ENCODE measurements at regions of chr6 and their contacts with region 1.

Region 1: DNA sequence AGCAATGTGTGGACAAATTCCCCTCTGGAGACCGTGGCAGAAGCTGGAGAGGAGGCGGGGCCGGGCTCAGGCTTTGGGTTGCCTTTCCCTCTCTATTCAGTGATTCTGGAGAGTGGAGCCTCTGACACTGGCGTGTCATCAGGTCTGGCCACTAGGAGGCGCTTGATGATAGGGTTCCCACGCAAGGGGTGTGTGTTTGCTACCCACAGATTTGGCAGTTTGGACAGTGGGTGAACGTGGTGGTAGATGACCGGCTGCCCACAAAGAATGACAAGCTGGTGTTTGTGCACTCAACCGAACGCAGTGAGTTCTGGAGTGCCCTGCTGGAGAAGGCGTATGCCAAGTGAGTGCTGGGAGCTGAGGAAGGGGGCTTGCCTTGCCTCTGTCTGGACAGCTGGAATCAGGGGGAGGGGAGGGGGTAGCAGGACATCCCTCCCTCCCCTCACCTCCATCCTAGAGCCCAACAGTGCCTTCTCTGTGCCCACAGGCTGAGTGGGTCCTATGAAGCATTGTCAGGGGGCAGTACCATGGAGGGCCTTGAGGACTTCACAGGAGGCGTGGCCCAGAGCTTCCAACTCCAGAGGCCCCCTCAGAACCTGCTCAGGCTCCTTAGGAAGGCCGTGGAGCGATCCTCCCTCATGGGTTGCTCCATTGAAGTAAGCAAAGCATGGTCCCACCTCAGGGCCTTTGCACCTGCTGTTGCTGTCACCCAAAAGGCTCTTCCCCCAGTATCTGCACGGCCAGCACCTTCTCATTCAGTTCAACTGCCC is 14.3 kb downstream of the CAPN11 start:
- DNase-seq: peak; percentile 87
- H3K4me3 Mint-ChIP-seq: no peak overlapping the region
- H3K27ac Mint-ChIP-seq: peak overlapping the region; percentile 9
- H3K4me1 Mint-ChIP-seq: peaks cover 18% of the 10 kb centered on the region
- H3K27me3 Mint-ChIP-seq: peaks cover 21% of the 10 kb centered on the region

Region 2: GRCh38 chr6:44161997-44162338 is 10.9 kb before region 1 on chr6:
- CTCF ChIA-PET with region 1: interaction called, 12 read pairs
- POLR2A ChIA-PET with region 1: no interaction called
- intact Hi-C with region 1: no loop called
- DNase-seq: peak; percentile 20
- H3K4me3 Mint-ChIP-seq: no peak overlapping the region
- H3K27ac Mint-ChIP-seq: no peak overlapping the region
- H3K4me1 Mint-ChIP-seq: peaks cover 8% of the 10 kb centered on the region
- H3K27me3 Mint-ChIP-seq: peaks cover 17% of the 10 kb centered on the region

Region 3: GRCh38 chr6:44221291-44221960 is 48.5 kb after region 1 on chr6:
- CTCF ChIA-PET with region 1: interaction called, 7 read pairs
- POLR2A ChIA-PET with region 1: interaction called, 3 read pairs
- intact Hi-C with region 1: loop called (anchors 5 kb)
- DNase-seq: peak; percentile 88
- H3K4me3 Mint-ChIP-seq: no peak overlapping the region
- H3K27ac Mint-ChIP-seq: no peak overlapping the region
- H3K4me1 Mint-ChIP-seq: peaks cover 34% of the 10 kb centered on the region
- H3K27me3 Mint-ChIP-seq: peaks cover 9% of the 10 kb centered on the region

Region 4: GRCh38 chr6:44246663-44247337 is 73.9 kb after region 1 on chr6 and contains the start of gene HSP90AB1:
- CTCF ChIA-PET with region 1: interaction called, 7 read pairs
- POLR2A ChIA-PET with region 1: no interaction called
- intact Hi-C with region 1: loop called (anchors 2 kb)
- DNase-seq: peak; percentile 99
- H3K4me3 Mint-ChIP-seq: peak within 1 kb of the TSS; percentile 96
- H3K27ac Mint-ChIP-seq: peak within 1 kb of the TSS; percentile 99
- H3K4me1 Mint-ChIP-seq: peaks cover 45% of the 10 kb centered on the region
- H3K27me3 Mint-ChIP-seq: peaks cover 4% of the 10 kb centered on the region
- total RNA-seq, gene HSP90AB1: 1,671 to 1,695 TPM

Region 5: DNA sequence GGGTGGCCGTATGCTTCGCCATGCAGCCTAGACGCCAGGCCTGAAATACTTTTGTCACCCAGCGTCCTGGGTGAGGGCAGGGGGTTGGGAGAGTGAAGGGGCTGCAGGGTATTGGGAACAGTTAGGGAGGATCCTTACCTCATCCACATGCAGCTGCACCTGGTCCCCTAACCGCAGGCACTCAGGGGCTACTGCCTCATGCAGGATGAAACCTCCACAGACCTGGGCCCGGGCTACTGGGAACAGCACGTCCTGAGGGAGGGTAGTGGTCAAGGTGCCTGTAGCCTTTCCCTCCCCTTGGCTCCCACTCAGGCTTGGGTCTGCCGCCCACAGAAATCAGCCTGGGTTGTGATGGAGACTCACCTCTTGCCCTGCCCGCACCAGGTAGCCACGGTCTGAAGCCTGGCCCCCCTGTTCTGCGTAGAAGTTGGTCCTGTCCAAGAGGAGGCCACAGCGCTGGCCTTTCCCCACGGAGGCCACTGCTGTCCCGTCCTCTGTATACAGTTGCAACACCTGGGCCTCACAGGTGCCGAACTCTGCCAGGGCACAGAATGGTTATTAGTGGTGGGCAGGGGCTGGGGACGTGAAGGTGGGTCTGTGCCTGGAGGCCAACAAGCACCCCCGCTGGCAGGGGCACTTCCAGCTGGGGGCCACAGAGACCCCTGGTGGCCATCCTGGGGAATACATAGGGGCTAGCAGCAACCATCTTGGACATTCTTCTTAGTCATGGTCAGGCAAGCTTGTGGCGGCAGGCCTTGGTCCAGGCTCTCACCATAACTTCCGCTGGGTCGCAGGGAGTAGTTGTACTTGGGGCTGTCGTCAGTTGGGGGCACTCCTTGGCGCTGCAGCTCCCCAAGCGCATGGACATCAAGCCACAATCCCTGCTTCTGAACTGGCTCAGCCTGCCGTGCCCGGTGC is 131.6 kb after region 1 on chr6:
- CTCF ChIA-PET with region 1: interaction called, 8 read pairs
- POLR2A ChIA-PET with region 1: no interaction called
- intact Hi-C with region 1: loop called (anchors 1 kb)
- DNase-seq: peak; percentile 45
- H3K4me3 Mint-ChIP-seq: no peak overlapping the region
- H3K27ac Mint-ChIP-seq: no peak overlapping the region
- H3K4me1 Mint-ChIP-seq: no peaks in the 10 kb centered on the region
- H3K27me3 Mint-ChIP-seq: no peaks in the 10 kb centered on the region

Region 6: GRCh38 chr6:44367681-44368080 is 194.8 kb after region 1 on chr6:
- CTCF ChIA-PET with region 1: no interaction called
- POLR2A ChIA-PET with region 1: no interaction called
- intact Hi-C with region 1: no loop called
- DNase-seq: no peak
- H3K4me3 Mint-ChIP-seq: no peak overlapping the region
- H3K27ac Mint-ChIP-seq: no peak overlapping the region
- H3K4me1 Mint-ChIP-seq: no peaks in the 10 kb centered on the region
- H3K27me3 Mint-ChIP-seq: peaks cover 12% of the 10 kb centered on the region

Measured in activated CD4-positive, alpha-beta memory T cell treated with anti-CD3 and anti-CD28 coated beads for 36 hours (primary cell).